Breast epithelium (tissue), 4 donors: ENCODE measurements at regions of chr3 and their contacts with region 1.

Region 1: GRCh38 chr3:178880274-178880673 is 191.3 kb downstream of the ZMAT3 start:
- DNase-seq: no peak
- H3K4me3 ChIP-seq: no peak overlapping the region
- H3K27ac ChIP-seq: no peak overlapping the region
- H3K4me1 ChIP-seq: no peaks in the 10 kb centered on the region
- H3K27me3 ChIP-seq: no peaks in the 10 kb centered on the region
- CTCF ChIP-seq: no peak
- POLR2A ChIP-seq: no peak

Region 2: GRCh38 chr3:179355996-179356395 is 475.7 kb after region 1 on chr3:
- intact Hi-C with region 1: loop called (anchors 10 kb)
- DNase-seq: no peak
- H3K4me3 ChIP-seq: no peak overlapping the region
- H3K27ac ChIP-seq: no peak overlapping the region
- H3K4me1 ChIP-seq: no peaks in the 10 kb centered on the region
- H3K27me3 ChIP-seq: no peaks in the 10 kb centered on the region
- CTCF ChIP-seq: no peak
- POLR2A ChIP-seq: no peak